Heart right ventricle (tissue), 16 donors: ENCODE measurements at regions of chr3 and their contacts with region 1.

Region 1: GRCh38 chr3:101685870-101686412 is 577 bp downstream of the RPL24 start:
- DNase-seq: no peak
- ATAC-seq: peak; percentile 5 to 48 (median 28)
- H3K4me3 ChIP-seq: peak overlapping the region; percentile 42 to 96 (median 76)
- H3K27ac ChIP-seq: peak overlapping the region; percentile 10 to 97 (median 90)
- H3K4me1 ChIP-seq: peaks cover 5 to 63% (median 37%) of the 10 kb centered on the region in 9 donors
- H3K27me3 ChIP-seq: no peaks in the 10 kb centered on the region
- CTCF ChIP-seq: no peak

Region 2: GRCh38 chr3:101724329-101725193 is 38.6 kb after region 1 on chr3 and contains the start of gene CEP97:
- intact Hi-C with region 1: loop called in 1 of 10 experiments (anchors 5 kb)
- DNase-seq: peak; percentile 89 to 91
- ATAC-seq: peak; percentile 99 to 100 (median 100)
- H3K4me3 ChIP-seq: peak within 1 kb of the TSS; percentile 43 to 89 (median 74)
- H3K27ac ChIP-seq: peak within 1 kb of the TSS in 9 of 10 donors; percentile 46 to 85 (median 82)
- H3K4me1 ChIP-seq: peaks cover 0 to 37% (median 13%) of the 10 kb centered on the region in 9 donors
- H3K27me3 ChIP-seq: no peaks in the 10 kb centered on the region
- CTCF ChIP-seq: no peak
- total RNA-seq, gene CEP97: 5.7 to 11.4 (median 7.8) TPM

Region 3: GRCh38 chr3:101784855-101785613 is 99.1 kb after region 1 on chr3:
- intact Hi-C with region 1: no loop called
- DNase-seq: no peak
- ATAC-seq: peak in 7 of 8 donors; percentile 37 to 93 (median 71)
- H3K4me3 ChIP-seq: peak overlapping the region in 6 of 10 donors; percentile 10 to 44 (median 33)
- H3K27ac ChIP-seq: peak overlapping the region; percentile 10 to 83 (median 68)
- H3K4me1 ChIP-seq: peaks cover 0 to 43% (median 23%) of the 10 kb centered on the region in 9 donors
- H3K27me3 ChIP-seq: no peaks in the 10 kb centered on the region
- CTCF ChIP-seq: no peak